ENCODE measurements at regions of chr17 and their contacts with region 1.

Region 1: DNA sequence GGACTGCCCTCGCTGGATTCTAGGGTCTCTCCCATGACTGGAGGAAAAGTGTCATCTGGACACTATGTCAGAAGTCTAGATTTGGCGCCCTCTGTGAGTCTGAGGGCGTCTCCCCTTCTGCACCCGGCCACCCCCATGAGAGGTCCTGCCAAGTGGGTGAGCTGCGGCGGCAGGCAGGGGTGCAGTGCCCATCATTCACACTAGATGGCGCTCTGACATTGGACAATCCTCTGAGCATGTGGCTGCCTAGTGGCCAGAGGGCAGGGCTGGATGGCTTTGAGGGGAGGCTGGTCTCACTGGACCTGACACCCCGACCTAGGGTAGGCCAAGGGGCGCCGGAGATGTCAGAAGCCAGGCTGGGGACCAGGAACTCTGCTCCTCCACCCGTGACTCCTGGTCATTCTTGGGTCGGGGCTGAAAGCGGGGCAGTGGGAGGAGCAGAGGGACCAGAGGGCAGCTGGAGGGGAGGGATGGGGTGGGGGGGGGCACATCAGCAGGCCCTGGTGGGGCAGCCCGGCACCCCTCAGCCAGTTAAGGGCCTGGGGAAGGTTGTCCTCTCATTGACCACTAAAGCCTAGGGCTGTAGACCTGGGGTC is 28.0 kb downstream of the MRM1 start:
- DNase-seq: peak; percentile 83
- H3K4me3 ChIP-seq: no peak overlapping the region
- H3K27ac ChIP-seq: no peak overlapping the region
- H3K4me1 ChIP-seq: no peaks in the 10 kb centered on the region
- H3K27me3 ChIP-seq: peaks cover 0 to 54% (median 4%) of the 10 kb centered on the region in 3 donors
- CTCF ChIP-seq: peak; percentile 80 to 99 (median 96)
- EP300 ChIP-seq: no peak
- POLR2A ChIP-seq: no peak

Region 2: DNA sequence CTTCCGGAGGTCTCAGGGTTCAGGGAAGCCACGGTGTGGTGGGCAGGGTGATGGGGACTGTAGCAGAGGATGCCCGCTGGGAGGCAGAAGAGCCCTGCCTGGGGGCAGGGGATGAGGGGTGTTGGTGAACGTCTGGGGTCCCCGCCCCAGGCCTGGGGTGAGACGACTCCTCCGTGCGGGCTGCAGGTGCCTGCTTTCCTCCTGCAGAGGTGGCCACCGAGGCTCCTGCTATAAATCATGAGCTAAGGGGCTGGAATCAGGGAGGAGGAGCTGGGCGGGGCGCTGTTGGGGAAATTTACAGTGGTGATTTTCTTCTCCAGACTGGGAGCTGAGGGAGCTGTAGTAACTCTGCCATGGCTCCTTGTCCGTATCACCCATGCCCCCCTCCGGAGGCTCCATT is 139.0 kb after region 1 on chr17:
- intact Hi-C with region 1: loop called (anchors 10 kb)
- DNase-seq: no peak
- H3K4me3 ChIP-seq: no peak overlapping the region
- H3K27ac ChIP-seq: no peak overlapping the region
- H3K4me1 ChIP-seq: no peaks in the 10 kb centered on the region
- H3K27me3 ChIP-seq: peaks cover 0 to 37% (median 9%) of the 10 kb centered on the region in 3 donors
- CTCF ChIP-seq: no peak
- EP300 ChIP-seq: no peak
- POLR2A ChIP-seq: no peak

Region 3: GRCh38 chr17:37047631-37048104 is 418.3 kb after region 1 on chr17:
- intact Hi-C with region 1: loop called (anchors 2 kb)
- DNase-seq: peak; percentile 82
- H3K4me3 ChIP-seq: no peak overlapping the region
- H3K27ac ChIP-seq: no peak overlapping the region
- H3K4me1 ChIP-seq: no peaks in the 10 kb centered on the region
- H3K27me3 ChIP-seq: no peaks in the 10 kb centered on the region
- CTCF ChIP-seq: peak; percentile 45 to 93 (median 68)
- EP300 ChIP-seq: no peak
- POLR2A ChIP-seq: no peak